Naive thymus-derived CD4-positive, alpha-beta T cell (primary cell): ENCODE measurements at regions of chr3 and their contacts with region 1.

Region 1: GRCh38 chr3:107794664-107795443 is 272.1 kb downstream of the BBX start:
- DNase-seq: no peak
- ATAC-seq: no peak
- H3K4me3 ChIP-seq: no peak overlapping the region
- H3K4me3 Mint-ChIP-seq: no peak overlapping the region
- H3K27ac ChIP-seq: no peak overlapping the region
- H3K27ac Mint-ChIP-seq: peak overlapping the region in 5 of 9 donors; percentile 27 to 79 (median 51)
- H3K4me1 ChIP-seq: peaks cover 6 to 7% of the 10 kb centered on the region in 2 donors
- H3K4me1 Mint-ChIP-seq: peaks cover 6 to 23% (median 19%) of the 10 kb centered on the region in 7 donors
- H3K27me3 ChIP-seq: no peaks in the 10 kb centered on the region
- H3K27me3 Mint-ChIP-seq: no peaks in the 10 kb centered on the region

Region 2: GRCh38 chr3:107531917-107532469 is 262.9 kb before region 1 on chr3:
- CTCF ChIA-PET with region 1: no interaction called
- POLR2A ChIA-PET with region 1: no interaction called
- intact Hi-C with region 1: no loop called
- DNase-seq: no peak
- ATAC-seq: no peak
- H3K4me3 ChIP-seq: no peak overlapping the region
- H3K4me3 Mint-ChIP-seq: no peak overlapping the region
- H3K27ac ChIP-seq: no peak overlapping the region
- H3K27ac Mint-ChIP-seq: peak overlapping the region in 1 of 9 donors; percentile 27
- H3K4me1 ChIP-seq: no peaks in the 10 kb centered on the region
- H3K4me1 Mint-ChIP-seq: peaks cover 6 to 76% (median 52%) of the 10 kb centered on the region in 7 donors
- H3K27me3 ChIP-seq: no peaks in the 10 kb centered on the region
- H3K27me3 Mint-ChIP-seq: peaks cover 0 to under 1% (median 0%) of the 10 kb centered on the region in 5 donors

Region 3: GRCh38 chr3:107775974-107776373 is 18.9 kb before region 1 on chr3:
- CTCF ChIA-PET with region 1: no interaction called
- POLR2A ChIA-PET with region 1: no interaction called
- intact Hi-C with region 1: loop called in 1 of 2 experiments (anchors 2 kb)
- DNase-seq: no peak
- ATAC-seq: no peak
- H3K4me3 ChIP-seq: no peak overlapping the region
- H3K4me3 Mint-ChIP-seq: no peak overlapping the region
- H3K27ac ChIP-seq: no peak overlapping the region
- H3K27ac Mint-ChIP-seq: no peak overlapping the region
- H3K4me1 ChIP-seq: no peaks in the 10 kb centered on the region
- H3K4me1 Mint-ChIP-seq: peaks cover 0 to 7% (median 0%) of the 10 kb centered on the region in 7 donors
- H3K27me3 ChIP-seq: no peaks in the 10 kb centered on the region
- H3K27me3 Mint-ChIP-seq: no peaks in the 10 kb centered on the region

Region 4: DNA sequence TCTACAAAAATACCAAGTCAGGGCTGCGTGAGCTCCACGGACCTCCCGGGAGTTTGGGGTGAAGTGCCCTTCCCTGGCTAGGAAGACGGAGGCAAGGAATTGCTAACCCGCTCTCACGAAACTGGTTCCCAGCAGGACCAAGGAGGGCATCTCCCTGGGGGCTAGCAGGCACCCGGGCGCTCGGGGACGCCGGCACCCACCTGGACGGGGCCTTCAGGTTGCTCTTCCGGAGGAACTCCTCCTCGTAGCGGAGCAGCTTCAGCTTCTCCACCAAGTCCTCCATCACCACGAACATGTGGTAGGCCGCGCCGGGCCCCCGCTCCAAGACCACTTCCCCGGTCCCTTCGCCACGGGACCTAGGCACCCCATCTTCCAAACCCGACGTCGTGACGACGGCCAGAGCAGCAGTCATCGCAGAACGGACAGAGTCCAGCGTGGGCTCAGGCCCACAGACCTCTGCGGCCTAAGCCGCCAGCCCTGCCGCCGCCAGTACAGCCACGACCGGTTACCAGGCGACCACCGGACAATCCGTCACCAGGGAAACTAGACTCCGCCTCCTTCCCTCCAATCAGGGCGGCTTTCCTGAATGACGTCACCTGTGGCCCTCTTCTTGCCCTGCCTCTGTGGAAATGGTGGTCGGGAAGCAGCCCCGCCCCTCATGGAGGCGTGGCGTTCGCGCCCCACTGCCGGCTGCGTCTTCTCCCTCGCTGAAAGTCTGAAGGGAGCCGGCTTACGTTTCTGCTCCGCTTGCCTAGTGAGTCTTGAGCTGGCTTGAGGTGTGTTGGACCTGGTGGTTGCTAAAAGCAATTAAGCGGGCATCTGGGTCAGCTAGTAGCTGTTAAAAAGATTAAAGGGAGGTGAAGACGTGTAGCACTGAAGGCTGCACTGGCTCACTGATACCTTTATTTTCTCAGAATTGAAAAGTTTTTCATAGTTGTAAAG is 427.3 kb after region 1 on chr3 and contains the start of gene IFT57:
- CTCF ChIA-PET with region 1: no interaction called
- POLR2A ChIA-PET with region 1: no interaction called
- intact Hi-C with region 1: no loop called
- DNase-seq: peak; percentile 89 to 97 (median 96)
- ATAC-seq: peak; percentile 97
- H3K4me3 ChIP-seq: peak within 1 kb of the TSS; percentile 59
- H3K4me3 Mint-ChIP-seq: peak within 1 kb of the TSS; percentile 93 to 99 (median 97)
- H3K27ac ChIP-seq: peak within 1 kb of the TSS; percentile 95
- H3K27ac Mint-ChIP-seq: peak within 1 kb of the TSS; percentile 95 to 100 (median 99)
- H3K4me1 ChIP-seq: peaks cover 21 to 24% of the 10 kb centered on the region in 2 donors
- H3K4me1 Mint-ChIP-seq: peaks cover 27 to 83% (median 62%) of the 10 kb centered on the region in 7 donors
- H3K27me3 ChIP-seq: no peaks in the 10 kb centered on the region
- H3K27me3 Mint-ChIP-seq: no peaks in the 10 kb centered on the region
- total RNA-seq, gene IFT57: 18.0 to 45.4 (median 26.4) TPM

Region 5: GRCh38 chr3:108610651-108611050 is 815.8 kb after region 1 on chr3:
- CTCF ChIA-PET with region 1: no interaction called
- POLR2A ChIA-PET with region 1: no interaction called
- intact Hi-C with region 1: no loop called
- DNase-seq: no peak
- ATAC-seq: no peak
- H3K4me3 ChIP-seq: no peak overlapping the region
- H3K4me3 Mint-ChIP-seq: no peak overlapping the region
- H3K27ac ChIP-seq: no peak overlapping the region
- H3K27ac Mint-ChIP-seq: peak overlapping the region in 1 of 9 donors; percentile 18
- H3K4me1 ChIP-seq: peaks cover 3 to 5% of the 10 kb centered on the region in 2 donors
- H3K4me1 Mint-ChIP-seq: peaks cover under 1 to 17% (median 11%) of the 10 kb centered on the region in 7 donors
- H3K27me3 ChIP-seq: no peaks in the 10 kb centered on the region
- H3K27me3 Mint-ChIP-seq: no peaks in the 10 kb centered on the region